ENCODE measurements at regions of chr6 and their contacts with region 1.

Region 1: DNA sequence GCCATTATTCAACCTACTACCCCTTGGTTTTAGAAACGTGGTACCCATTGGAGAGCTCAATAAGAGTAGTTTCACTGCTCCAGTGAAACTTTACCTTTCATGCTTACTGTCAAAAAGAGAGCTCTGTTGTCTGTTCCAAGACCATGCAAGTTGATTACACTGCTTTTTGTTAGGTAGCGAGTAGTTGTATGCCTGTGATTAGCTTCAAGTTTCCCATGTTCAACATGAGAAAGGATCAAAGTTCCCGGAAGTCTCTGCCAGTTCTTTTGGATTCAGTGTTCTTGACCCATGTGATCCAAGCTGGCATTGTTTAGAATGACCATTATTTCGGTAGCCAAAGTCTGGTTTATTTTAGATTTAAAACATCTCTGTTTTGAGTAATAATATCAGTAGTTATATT is 107.1 kb downstream of the ZFAND3 start:
- DNase-seq: no peak
- ATAC-seq: no peak
- H3K4me3 ChIP-seq: no peak overlapping the region
- H3K27ac ChIP-seq: no peak overlapping the region
- H3K4me1 ChIP-seq: peaks cover 7% of the 10 kb centered on the region
- H3K27me3 ChIP-seq: no peaks in the 10 kb centered on the region

Region 2: DNA sequence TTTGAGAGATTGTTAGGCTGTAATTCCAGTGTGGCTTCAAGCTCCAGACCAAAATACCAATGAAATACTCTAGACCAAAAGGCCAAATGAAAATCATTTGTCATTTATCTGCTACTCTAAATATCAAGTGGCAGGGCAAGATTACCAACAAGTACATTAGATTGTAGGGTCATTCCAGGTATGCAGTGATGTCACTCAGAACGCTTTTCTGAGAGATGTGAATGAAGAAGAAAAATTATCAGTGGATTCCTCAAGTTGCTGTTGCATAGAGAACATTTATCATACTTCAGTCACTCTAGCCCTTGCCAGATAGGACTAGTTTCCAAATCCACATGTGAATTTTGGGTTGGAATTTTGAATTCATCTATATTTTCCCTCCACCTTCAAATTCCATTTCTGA is 42.1 kb before region 1 on chr6:
- intact Hi-C with region 1: loop called in 1 of 4 experiments (anchors 2 kb)
- DNase-seq: no peak
- ATAC-seq: no peak
- H3K4me3 ChIP-seq: no peak overlapping the region
- H3K27ac ChIP-seq: no peak overlapping the region
- H3K4me1 ChIP-seq: peaks cover 4% of the 10 kb centered on the region
- H3K27me3 ChIP-seq: no peaks in the 10 kb centered on the region

Region 3: DNA sequence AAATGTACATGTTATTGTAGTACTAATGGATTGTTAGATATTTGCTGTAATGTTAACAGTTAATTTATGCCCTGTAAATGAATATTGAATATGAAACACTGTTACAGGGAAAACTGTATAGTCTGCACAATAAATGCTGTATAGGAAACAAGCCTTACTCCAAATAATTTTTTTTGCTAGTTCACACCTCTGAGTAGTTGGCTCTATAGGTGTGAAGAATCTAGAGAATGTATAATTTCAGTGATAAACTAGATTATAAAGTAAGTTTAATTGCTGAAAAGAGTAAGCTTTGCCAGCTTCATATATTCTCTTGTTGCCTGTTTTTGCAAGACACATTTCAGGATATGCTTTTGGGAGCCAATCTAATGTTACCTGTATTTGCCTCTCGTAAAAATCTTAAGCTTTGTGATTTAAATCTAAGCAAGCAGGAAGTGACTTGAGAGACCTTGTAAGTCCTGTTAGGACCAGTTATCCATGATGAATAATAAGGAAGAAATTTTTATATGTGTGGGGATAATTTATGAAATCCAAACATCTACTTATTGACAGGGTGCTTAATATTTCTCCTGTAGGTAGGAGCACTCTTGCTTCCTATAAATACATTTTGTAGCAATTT is 125.3 kb after region 1 on chr6:
- intact Hi-C with region 1: no loop called
- DNase-seq: no peak
- ATAC-seq: no peak
- H3K4me3 ChIP-seq: no peak overlapping the region
- H3K27ac ChIP-seq: no peak overlapping the region
- H3K4me1 ChIP-seq: no peaks in the 10 kb centered on the region
- H3K27me3 ChIP-seq: no peaks in the 10 kb centered on the region

Region 4: DNA sequence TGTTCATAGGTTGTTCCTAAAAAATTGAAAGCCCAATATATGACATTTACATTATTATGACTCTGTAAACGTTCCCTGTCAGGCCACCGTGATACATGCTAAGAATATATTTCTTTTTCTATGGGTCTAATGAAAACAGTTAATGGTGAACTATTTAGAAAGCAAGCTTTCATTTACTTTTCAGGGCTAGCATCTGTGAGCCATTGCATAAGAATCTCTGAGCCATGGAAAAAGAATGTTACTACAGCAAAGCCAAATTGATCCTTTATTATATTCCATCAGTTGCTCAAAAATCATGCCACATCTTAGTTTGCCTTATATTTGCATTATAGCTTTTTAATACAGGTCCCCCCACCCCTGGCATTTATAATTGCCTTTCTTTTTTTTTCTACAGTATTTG is 168.4 kb after region 1 on chr6:
- intact Hi-C with region 1: no loop called
- DNase-seq: no peak
- ATAC-seq: no peak
- H3K4me3 ChIP-seq: no peak overlapping the region
- H3K27ac ChIP-seq: no peak overlapping the region
- H3K4me1 ChIP-seq: no peaks in the 10 kb centered on the region
- H3K27me3 ChIP-seq: no peaks in the 10 kb centered on the region

Measured in right cardiac atrium (tissue), 5 donors.